Naive thymus-derived CD4-positive, alpha-beta T cell (primary cell): ENCODE measurements at regions of chr9 and their contacts with region 1.

Region 1: DNA sequence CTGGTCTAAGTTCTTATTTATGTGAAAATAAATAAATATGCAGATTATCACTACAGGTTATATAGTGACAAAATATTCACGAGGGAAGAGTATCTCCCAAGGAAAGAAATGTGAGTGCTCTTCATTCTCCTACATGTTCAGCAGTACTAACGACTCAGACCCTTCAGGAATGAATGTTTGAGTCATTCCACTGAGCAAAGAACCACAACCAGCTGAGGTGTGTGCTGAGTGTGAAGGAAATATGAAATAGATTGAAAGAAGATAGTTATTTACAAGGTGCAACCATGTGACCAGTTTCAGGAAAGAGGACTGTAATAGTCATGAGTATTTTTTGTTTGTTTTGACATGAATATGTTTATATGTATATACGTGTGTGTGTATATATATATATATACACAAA is 228.7 kb downstream of the TUSC1 start:
- DNase-seq: no peak
- ATAC-seq: no peak
- H3K4me3 ChIP-seq: no peak overlapping the region
- H3K4me3 Mint-ChIP-seq: no peak overlapping the region
- H3K27ac ChIP-seq: no peak overlapping the region
- H3K27ac Mint-ChIP-seq: no peak overlapping the region
- H3K4me1 ChIP-seq: no peaks in the 10 kb centered on the region
- H3K4me1 Mint-ChIP-seq: no peaks in the 10 kb centered on the region
- H3K27me3 ChIP-seq: no peaks in the 10 kb centered on the region
- H3K27me3 Mint-ChIP-seq: no peaks in the 10 kb centered on the region

Region 2: GRCh38 chr9:25472140-25472539 is 22.6 kb after region 1 on chr9:
- CTCF ChIA-PET with region 1: no interaction called
- POLR2A ChIA-PET with region 1: no interaction called
- intact Hi-C with region 1: loop called in 1 of 2 experiments (anchors 2 kb)
- DNase-seq: no peak
- ATAC-seq: no peak
- H3K4me3 ChIP-seq: no peak overlapping the region
- H3K4me3 Mint-ChIP-seq: no peak overlapping the region
- H3K27ac ChIP-seq: no peak overlapping the region
- H3K27ac Mint-ChIP-seq: no peak overlapping the region
- H3K4me1 ChIP-seq: no peaks in the 10 kb centered on the region
- H3K4me1 Mint-ChIP-seq: peaks cover 0 to 1% (median 0%) of the 10 kb centered on the region in 7 donors
- H3K27me3 ChIP-seq: no peaks in the 10 kb centered on the region
- H3K27me3 Mint-ChIP-seq: no peaks in the 10 kb centered on the region

Region 3: DNA sequence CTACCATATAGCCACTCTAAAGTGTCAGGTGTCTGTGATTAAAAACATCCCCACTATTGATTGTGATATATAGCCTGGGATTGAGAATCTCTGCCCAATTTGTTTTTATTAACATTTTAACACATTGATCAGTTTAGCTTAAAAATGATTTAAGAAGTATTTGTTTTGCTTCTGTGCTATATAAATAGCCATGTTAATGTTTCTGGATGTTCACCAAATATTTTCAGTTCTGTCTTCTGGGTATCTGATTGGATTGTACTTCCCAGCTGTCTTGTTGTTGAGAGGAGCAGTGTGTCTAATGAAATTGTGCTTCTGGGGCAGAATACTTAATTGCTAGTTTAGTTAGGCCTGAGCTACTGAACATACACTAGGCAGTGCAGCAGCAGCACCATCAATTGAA is 355.4 kb after region 1 on chr9:
- CTCF ChIA-PET with region 1: no interaction called
- POLR2A ChIA-PET with region 1: no interaction called
- intact Hi-C with region 1: no loop called
- DNase-seq: no peak
- ATAC-seq: no peak
- H3K4me3 ChIP-seq: no peak overlapping the region
- H3K4me3 Mint-ChIP-seq: no peak overlapping the region
- H3K27ac ChIP-seq: no peak overlapping the region
- H3K27ac Mint-ChIP-seq: no peak overlapping the region
- H3K4me1 ChIP-seq: no peaks in the 10 kb centered on the region
- H3K4me1 Mint-ChIP-seq: no peaks in the 10 kb centered on the region
- H3K27me3 ChIP-seq: no peaks in the 10 kb centered on the region
- H3K27me3 Mint-ChIP-seq: no peaks in the 10 kb centered on the region